ENCODE measurements at regions of chr10 and their contacts with region 1.

Region 1: DNA sequence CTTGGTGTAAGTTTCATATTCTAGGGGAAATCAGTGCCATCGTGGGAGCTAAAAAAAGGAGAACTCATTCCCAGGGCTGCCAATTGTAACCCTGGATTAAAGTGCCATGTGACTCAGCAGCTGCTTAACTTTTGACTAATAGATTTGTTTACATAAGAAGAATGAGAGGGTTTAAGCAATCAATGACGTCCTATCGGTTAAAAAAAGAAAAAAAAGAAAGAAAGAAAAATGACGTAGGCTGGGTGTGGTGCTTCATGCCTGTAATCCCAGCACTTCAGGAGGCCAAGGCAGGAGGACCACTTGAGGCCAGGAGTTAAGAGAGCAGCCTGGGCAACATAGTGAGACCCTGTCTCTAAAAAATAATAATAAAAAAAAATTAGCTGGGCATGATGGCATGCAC is 116.2 kb upstream of the AFAP1L2 start:
- DNase-seq: no peak
- ATAC-seq: peak in 1 of 4 donors; percentile 27
- H3K4me3 ChIP-seq: no peak overlapping the region
- H3K27ac ChIP-seq: peak overlapping the region in 10 of 12 donors; percentile 25 to 66 (median 46)
- H3K4me1 ChIP-seq: peaks cover 8 to 100% (median 84%) of the 10 kb centered on the region in 12 donors
- H3K27me3 ChIP-seq: no peaks in the 10 kb centered on the region
- CTCF ChIP-seq: no peak
- POLR2A ChIP-seq: no peak

Region 2: GRCh38 chr10:114477285-114477684 is 43.2 kb before region 1 on chr10:
- intact Hi-C with region 1: loop called in 3 of 10 experiments (anchors 2 to 5 kb)
- DNase-seq: peak in 1 of 5 donors; percentile 45
- ATAC-seq: peak; percentile 36 to 68 (median 56)
- H3K4me3 ChIP-seq: no peak overlapping the region
- H3K27ac ChIP-seq: peak overlapping the region in 11 of 12 donors; percentile 21 to 81 (median 54)
- H3K4me1 ChIP-seq: peaks cover 0 to 89% (median 43%) of the 10 kb centered on the region in 12 donors
- H3K27me3 ChIP-seq: no peaks in the 10 kb centered on the region
- CTCF ChIP-seq: no peak
- POLR2A ChIP-seq: peak in 1 of 2 donors; percentile 13

Region 3: GRCh38 chr10:114486938-114487814 is 33.3 kb before region 1 on chr10:
- intact Hi-C with region 1: loop called in 1 of 10 experiments (anchors 5 kb)
- DNase-seq: no peak
- ATAC-seq: no peak
- H3K4me3 ChIP-seq: no peak overlapping the region
- H3K27ac ChIP-seq: peak overlapping the region in 4 of 12 donors; percentile 5 to 80 (median 21)
- H3K4me1 ChIP-seq: peaks cover 9 to 92% (median 57%) of the 10 kb centered on the region in 12 donors
- H3K27me3 ChIP-seq: no peaks in the 10 kb centered on the region
- CTCF ChIP-seq: no peak
- POLR2A ChIP-seq: no peak

Measured in heart left ventricle (tissue), 16 donors.